Right ventricle myocardium superior (tissue), 1 donor: ENCODE measurements at regions of chr1 and their contacts with region 1.

Region 1: DNA sequence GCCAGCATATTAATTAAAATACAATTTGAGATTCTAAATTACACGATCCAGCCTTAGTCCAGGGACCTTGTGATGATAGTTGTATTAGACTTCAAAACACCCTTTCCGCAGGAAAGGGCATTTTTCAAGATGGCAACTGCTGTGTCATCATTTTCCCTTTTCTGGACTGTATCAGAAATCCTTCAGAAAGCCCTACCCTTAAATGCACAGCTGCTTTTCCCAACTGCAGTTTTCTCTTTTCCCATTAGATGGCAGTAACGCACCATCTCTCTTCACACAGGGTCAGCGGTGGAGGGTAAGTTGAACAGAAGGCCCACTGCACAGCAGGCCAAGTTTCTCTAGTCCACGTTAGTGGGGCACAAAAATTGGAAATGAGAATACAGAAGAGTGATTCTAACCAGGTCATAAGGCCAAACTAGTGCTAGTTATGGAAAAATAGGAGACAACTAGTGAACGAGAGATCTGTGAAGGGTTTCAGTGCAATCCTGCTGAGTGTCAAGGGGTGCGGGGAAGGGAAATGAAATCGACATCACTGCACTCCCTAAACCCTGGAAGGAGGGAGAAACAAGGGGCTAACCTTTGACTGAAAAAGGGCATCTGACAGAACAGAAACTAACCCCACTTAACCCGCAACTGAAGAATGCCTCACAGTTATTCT is 22.1 kb upstream of the TDRD10 start:
- DNase-seq: no peak
- ATAC-seq: peak; percentile 93

Region 2: GRCh38 chr1:154546264-154547063 is 66.6 kb after region 1 on chr1:
- intact Hi-C with region 1: loop called (anchors 5 kb)
- DNase-seq: peak; percentile 67
- ATAC-seq: peak; percentile 71

Region 3: GRCh38 chr1:154870115-154870571 is 390.2 kb after region 1 on chr1 and contains the start of gene KCNN3:
- intact Hi-C with region 1: loop called (anchors 10 kb)
- DNase-seq: peak; percentile 95
- ATAC-seq: peak; percentile 97
- total RNA-seq, gene KCNN3: 3.4 TPM